Esophagus squamous epithelium (tissue), 5 donors: ENCODE measurements at regions of chr20 and their contacts with region 1.

Region 1: DNA sequence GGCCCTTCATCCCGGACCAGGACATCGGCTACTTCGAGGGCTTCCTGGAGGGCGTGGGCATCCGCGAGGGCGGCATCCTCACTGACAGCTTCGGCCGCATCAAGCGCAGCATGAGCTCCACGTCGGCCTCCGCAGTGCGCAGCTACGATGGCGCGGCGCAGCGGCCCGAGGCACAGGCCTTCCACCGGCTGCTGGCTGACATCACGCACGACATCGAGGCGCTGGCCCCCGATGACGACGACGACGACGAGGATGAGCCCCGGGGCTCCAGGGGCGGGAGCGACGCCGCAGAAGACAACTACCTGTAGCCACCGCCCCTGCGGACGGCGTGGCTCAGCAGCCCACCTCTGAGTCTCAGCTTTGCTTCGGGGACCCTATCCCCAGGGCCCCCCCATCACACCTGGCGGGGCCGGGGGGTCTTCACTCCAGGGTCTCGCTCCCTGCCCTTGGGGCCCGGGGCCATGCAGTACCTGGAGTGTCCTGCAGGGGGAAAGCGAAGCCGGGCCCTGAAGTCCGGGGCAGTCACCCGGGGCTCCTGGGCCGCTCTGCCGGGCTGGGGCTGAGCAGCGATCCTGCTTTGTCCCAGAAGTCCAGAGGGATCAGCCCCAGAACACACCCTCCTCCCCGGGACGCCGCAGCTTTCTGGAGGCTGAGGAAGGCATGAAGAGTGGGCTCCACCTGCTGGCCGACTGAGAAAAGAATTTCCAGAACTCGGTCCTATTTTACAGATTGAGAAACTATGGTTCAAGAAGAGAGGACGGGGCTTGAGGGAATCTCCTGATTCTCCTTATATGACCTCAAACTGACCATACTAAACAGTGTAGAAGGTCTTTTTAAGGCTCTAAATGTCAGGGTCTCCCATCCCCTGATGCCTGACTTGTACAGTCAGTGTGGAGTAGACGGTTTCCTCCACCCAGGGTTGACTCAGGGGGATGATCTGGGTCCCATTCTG is 20.8 kb upstream of the HCK start:
- DNase-seq: no peak
- H3K4me3 ChIP-seq: peak overlapping the region in 3 of 4 donors; percentile 18 to 54 (median 21)
- H3K27ac ChIP-seq: no peak overlapping the region
- H3K4me1 ChIP-seq: peaks cover 0 to 12% (median 9%) of the 10 kb centered on the region in 3 donors
- H3K27me3 ChIP-seq: peaks cover 0 to 60% (median 2%) of the 10 kb centered on the region in 4 donors
- CTCF ChIP-seq: peak; percentile 80 to 98 (median 92)
- POLR2A ChIP-seq: no peak

Region 2: DNA sequence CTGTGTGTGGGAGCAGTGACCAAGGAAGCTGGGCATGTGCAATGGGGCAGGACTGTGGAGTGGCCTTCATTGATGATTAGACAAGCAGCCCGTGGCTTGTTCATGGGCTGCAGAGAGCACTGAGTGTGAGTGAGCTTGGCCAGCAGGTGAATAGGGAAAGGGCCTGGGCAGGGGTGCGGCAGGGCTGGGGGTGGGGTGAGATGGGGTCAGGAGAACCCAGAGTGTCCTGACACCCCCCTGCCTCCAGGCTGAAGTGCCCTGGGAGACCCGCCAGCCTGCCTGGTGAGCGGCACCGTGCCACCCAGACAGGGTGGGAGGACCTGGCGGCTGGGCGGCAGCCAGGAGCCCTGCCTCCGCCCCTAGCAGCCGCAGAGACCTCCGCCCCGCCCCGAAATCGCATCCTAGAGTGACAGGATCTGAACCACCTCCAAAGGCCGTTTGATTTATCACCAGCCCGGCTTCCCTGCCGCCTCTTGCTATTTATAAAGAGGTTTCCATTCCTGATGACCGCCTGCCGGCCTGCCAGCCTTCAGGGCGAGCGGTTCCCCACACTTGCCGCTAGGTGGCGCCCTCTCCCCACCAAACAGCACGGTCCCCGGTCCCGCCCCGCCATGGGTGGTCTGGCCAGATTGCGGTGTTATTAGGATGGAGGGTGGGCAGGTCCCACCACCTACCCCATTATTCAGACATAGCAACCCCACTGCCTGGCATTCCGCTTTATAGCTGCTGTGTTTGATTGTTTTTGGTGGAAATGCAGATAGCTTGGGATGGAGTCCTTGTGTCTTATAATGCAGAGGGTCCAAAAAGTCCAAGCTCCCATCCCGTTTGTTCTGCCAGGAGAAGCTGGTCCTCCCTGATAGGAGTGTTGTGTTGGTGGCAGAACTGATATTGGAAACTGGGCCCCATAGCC is 208.6 kb before region 1 on chr20:
- intact Hi-C with region 1: loop called (anchors 10 kb)
- DNase-seq: no peak
- H3K4me3 ChIP-seq: peak overlapping the region in 2 of 4 donors; percentile 4 to 40
- H3K27ac ChIP-seq: no peak overlapping the region
- H3K4me1 ChIP-seq: peaks cover 7 to 13% (median 9%) of the 10 kb centered on the region in 3 donors
- H3K27me3 ChIP-seq: peaks cover 0 to 7% (median 0%) of the 10 kb centered on the region in 4 donors
- CTCF ChIP-seq: peak; percentile 95 to 100 (median 97)
- POLR2A ChIP-seq: no peak